Endothelial cell of umbilical vein (primary cell): ENCODE measurements at regions of chr7 and their contacts with region 1.

Region 1: DNA sequence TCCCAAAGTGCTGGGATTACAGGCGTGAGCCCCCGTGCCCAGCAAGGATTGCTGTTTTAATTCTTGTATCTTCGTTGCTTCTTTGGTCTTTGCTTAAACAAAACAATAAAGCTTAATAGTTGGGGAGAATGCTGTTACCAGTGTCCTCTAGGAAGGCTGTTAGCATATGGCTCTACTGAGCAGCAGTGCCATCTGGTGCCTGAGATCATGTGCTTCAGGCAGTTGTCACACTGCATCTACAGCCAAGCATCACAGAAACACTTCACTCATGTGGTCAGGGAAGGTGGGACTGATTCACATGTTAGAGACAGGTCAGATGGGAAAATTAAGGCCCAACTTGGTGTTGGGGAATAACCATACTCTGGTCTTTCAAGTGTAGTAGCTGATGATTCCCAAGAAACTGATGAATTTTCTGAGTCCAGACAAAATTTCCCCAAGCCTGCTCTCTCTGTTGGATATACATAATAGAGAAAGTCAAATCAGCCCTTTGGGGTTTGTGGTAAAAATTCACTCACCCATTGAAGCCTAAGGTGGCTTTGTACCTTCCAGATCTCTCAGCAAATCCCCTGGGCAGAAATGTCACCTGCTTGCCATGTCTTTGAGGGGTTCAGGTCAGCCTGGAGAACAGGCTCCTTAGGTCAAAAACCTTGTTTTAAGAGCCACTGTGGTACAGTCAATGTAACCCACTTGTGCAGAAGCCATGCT is 28.4 kb downstream of the UBE2D4 start:
- DNase-seq: peak; percentile 54
- H3K4me3 ChIP-seq: no peak overlapping the region
- H3K27ac ChIP-seq: no peak overlapping the region
- H3K4me1 ChIP-seq: peaks cover 4% of the 10 kb centered on the region
- H3K27me3 ChIP-seq: no peaks in the 10 kb centered on the region
- CTCF ChIP-seq: peak; percentile 26 to 58
- POLR2A ChIP-seq: no peak

Region 2: GRCh38 chr7:43729214-43729923 is 225.3 kb before region 1 on chr7 and contains the start of gene COA1:
- CTCF ChIA-PET with region 1: no interaction called
- POLR2A ChIA-PET with region 1: no interaction called
- dilution Hi-C with region 1: no loop called
- intact Hi-C with region 1: loop called (anchors 5 kb)
- DNase-seq: peak; percentile 93
- H3K4me3 ChIP-seq: peak within 1 kb of the TSS; percentile 13 to 66 (median 58)
- H3K27ac ChIP-seq: peak within 1 kb of the TSS; percentile 48
- H3K4me1 ChIP-seq: peaks cover 14% of the 10 kb centered on the region
- H3K27me3 ChIP-seq: peaks cover 0 to 3% of the 10 kb centered on the region in 2 experiments
- CTCF ChIP-seq: no peak
- POLR2A ChIP-seq: peak; percentile 86
- total RNA-seq, gene COA1: 55.1 and 58.0 TPM in 2 replicates

Region 3: DNA sequence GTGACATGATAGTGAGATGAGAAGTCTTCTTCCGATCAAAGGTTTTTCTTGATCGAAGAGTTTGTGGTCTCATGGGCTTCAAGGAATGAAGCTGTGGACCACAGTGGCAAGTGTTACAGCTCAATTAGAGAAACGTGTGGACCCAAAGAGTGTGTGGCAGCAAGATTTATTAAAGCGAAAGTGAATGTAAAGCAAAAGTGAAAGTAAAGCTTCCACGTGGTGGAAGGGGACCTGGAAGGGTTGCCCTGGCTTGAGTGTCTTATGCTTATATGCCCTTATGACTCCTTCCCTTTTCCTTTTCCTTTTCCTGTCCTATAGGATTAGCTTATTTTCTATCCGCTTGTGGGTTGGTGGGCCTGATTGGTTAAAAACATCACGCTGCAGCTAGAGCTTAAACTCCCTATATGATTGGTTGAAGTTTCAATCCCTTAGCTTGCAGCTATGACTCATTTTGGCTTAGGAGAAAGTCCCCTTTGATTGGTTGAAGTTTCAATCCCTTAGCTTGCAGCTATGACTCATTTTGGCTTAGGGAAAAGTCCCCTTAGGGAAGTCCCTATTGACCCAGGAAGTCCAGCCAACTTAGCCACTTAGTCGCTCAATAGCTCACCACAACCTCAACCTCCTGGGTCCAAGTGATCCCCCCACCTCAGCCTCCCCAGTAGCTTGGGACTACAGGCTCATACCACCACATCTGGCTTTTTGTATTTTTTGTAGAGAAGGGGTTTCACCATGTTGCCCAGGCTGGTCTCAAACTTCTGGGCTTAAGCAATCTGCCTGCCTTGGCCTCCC is 120.0 kb before region 1 on chr7:
- CTCF ChIA-PET with region 1: interaction called, 20 read pairs
- POLR2A ChIA-PET with region 1: no interaction called
- dilution Hi-C with region 1: no loop called
- intact Hi-C with region 1: loop called (anchors 1 kb)
- DNase-seq: peak; percentile 22
- H3K4me3 ChIP-seq: no peak overlapping the region
- H3K27ac ChIP-seq: no peak overlapping the region
- H3K4me1 ChIP-seq: no peaks in the 10 kb centered on the region
- H3K27me3 ChIP-seq: peaks cover 0 to 3% of the 10 kb centered on the region in 2 experiments
- CTCF ChIP-seq: no peak
- POLR2A ChIP-seq: no peak

Region 4: GRCh38 chr7:43879477-43879876 is 75.2 kb before region 1 on chr7:
- CTCF ChIA-PET with region 1: interaction called, 6 read pairs
- POLR2A ChIA-PET with region 1: no interaction called
- dilution Hi-C with region 1: no loop called
- intact Hi-C with region 1: loop called (anchors 2 kb)
- DNase-seq: peak; percentile 77
- H3K4me3 ChIP-seq: no peak overlapping the region
- H3K27ac ChIP-seq: peak overlapping the region; percentile 58
- H3K4me1 ChIP-seq: peaks cover 30% of the 10 kb centered on the region
- H3K27me3 ChIP-seq: no peaks in the 10 kb centered on the region
- CTCF ChIP-seq: no peak
- POLR2A ChIP-seq: no peak

Region 5: GRCh38 chr7:43942997-43943704 is 11.5 kb before region 1 on chr7:
- CTCF ChIA-PET with region 1: interaction called, 12 read pairs
- POLR2A ChIA-PET with region 1: interaction called, 3 read pairs
- dilution Hi-C with region 1: no loop called
- intact Hi-C with region 1: no loop called
- DNase-seq: no peak
- H3K4me3 ChIP-seq: no peak overlapping the region
- H3K27ac ChIP-seq: no peak overlapping the region
- H3K4me1 ChIP-seq: no peaks in the 10 kb centered on the region
- H3K27me3 ChIP-seq: no peaks in the 10 kb centered on the region
- CTCF ChIP-seq: no peak
- POLR2A ChIP-seq: no peak